Activated CD8-positive, alpha-beta T cell treated with anti-CD3 and anti-CD28 coated beads, Interleukin-2, amount 10 ng/mL, durations not matched to agents 7 days and 5 days (primary cell): ENCODE measurements at regions of chr7 and their contacts with region 1.

Region 1: DNA sequence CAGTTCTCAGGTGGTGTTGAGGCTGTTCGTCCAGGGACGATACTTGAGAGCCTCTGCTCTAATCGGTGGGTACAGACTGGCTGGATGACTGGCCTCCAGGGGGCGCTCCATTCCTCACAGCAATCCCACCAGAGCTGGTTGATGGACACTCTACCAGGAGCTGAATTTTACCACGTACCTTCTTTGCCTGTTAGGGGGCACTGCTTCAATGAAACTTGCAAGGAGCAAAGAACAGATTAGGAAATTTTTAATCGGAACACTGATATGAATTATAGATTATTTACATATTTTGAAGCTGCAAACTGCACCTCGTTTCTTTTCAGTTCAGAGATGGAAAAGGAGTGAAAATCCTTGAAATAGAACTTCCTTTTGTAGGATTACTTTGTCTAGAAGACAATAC is 44.9 kb downstream of the KBTBD2 start:
- DNase-seq: peak; percentile 93
- ATAC-seq: peak; percentile 100
- H3K4me3 Mint-ChIP-seq: peak overlapping the region; percentile 31
- H3K27ac Mint-ChIP-seq: no peak overlapping the region
- H3K4me1 Mint-ChIP-seq: peaks cover 10% of the 10 kb centered on the region
- H3K27me3 Mint-ChIP-seq: peaks cover 31% of the 10 kb centered on the region

Region 2: DNA sequence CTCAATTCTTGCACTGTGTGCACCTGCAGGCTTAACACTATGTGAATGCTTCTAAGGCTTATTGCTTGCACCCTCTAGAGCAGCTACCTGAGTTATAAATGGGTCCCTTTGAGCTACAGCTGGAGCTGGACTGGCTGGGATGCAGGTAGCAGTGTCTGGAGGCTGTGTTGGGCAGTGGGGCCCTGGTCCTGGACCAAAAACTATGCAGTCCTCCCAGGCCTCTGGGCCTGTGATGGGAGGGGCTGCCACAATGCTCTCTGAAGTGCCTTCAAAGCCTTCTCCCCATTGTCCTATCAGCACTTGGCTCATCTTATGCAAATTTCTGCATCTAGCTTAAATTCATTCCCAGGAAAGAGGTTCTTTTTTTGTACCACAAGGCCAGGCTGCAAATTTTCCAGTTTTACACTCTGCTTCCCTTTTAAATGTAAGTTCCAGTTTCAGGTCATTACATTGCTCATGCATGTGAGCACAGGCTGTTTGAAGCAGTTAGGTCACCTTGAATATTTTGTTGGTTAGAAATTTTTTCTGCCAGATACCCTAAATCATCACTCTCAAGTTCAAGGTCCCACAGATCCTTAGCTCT is 18.8 kb after region 1 on chr7:
- CTCF ChIA-PET with region 1: interaction called, 24 read pairs
- POLR2A ChIA-PET with region 1: no interaction called
- DNase-seq: no peak
- ATAC-seq: no peak
- H3K4me3 Mint-ChIP-seq: no peak overlapping the region
- H3K27ac Mint-ChIP-seq: no peak overlapping the region
- H3K4me1 Mint-ChIP-seq: no peaks in the 10 kb centered on the region
- H3K27me3 Mint-ChIP-seq: peaks cover 3% of the 10 kb centered on the region

Region 3: GRCh38 chr7:32891800-32892520 is 45.3 kb after region 1 on chr7:
- CTCF ChIA-PET with region 1: interaction called, 34 read pairs
- POLR2A ChIA-PET with region 1: interaction called, 5 read pairs
- DNase-seq: peak; percentile 98
- ATAC-seq: peak; percentile 62
- H3K4me3 Mint-ChIP-seq: peak overlapping the region; percentile 80
- H3K27ac Mint-ChIP-seq: peak overlapping the region; percentile 94
- H3K4me1 Mint-ChIP-seq: peaks cover 40% of the 10 kb centered on the region
- H3K27me3 Mint-ChIP-seq: peaks cover 4% of the 10 kb centered on the region

Region 4: GRCh38 chr7:32942786-32943653 is 96.3 kb after region 1 on chr7:
- CTCF ChIA-PET with region 1: interaction called, 68 read pairs
- POLR2A ChIA-PET with region 1: no interaction called
- DNase-seq: peak; percentile 63
- ATAC-seq: peak; percentile 86
- H3K4me3 Mint-ChIP-seq: peak overlapping the region; percentile 63
- H3K27ac Mint-ChIP-seq: no peak overlapping the region
- H3K4me1 Mint-ChIP-seq: peaks cover 17% of the 10 kb centered on the region
- H3K27me3 Mint-ChIP-seq: peaks cover 16% of the 10 kb centered on the region

Region 5: DNA sequence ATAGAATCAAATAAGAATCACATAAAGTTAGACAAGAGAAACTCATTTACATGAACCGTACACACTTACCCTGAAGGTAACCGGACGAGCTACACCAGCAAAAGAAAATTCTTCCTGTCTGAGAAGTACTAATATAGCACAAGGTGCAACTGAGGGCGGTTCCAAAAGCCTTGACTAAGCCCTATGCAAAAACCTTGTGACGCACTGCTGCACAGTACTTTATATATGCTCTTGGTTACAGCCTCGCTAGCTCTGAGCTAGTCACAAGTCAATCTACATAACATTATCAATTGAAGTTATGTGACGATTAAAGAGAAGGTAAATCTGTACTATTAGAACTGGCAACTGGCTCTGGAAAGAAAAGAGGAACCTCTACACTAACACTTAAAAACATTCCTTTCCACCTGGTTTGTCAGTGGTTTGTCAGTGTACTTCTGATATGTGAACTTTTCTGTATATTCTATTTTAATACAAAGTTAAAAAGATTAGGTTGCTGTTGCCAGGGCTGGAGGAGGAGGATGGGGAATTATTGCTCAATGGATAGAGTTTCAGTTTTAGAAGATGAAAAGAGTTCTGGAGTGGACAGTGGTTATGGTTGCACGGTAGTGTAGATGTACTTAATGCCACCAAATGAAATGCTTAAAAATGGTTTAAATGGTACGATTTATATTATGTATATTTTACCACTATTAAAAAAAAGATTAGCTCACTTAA is 194.3 kb after region 1 on chr7:
- CTCF ChIA-PET with region 1: interaction called, 20 read pairs
- POLR2A ChIA-PET with region 1: no interaction called
- DNase-seq: peak; percentile 84
- ATAC-seq: peak; percentile 98
- H3K4me3 Mint-ChIP-seq: peak overlapping the region; percentile 78
- H3K27ac Mint-ChIP-seq: peak overlapping the region; percentile 73
- H3K4me1 Mint-ChIP-seq: peaks cover 43% of the 10 kb centered on the region
- H3K27me3 Mint-ChIP-seq: no peaks in the 10 kb centered on the region

Region 6: GRCh38 chr7:33183504-33183903 is 336.8 kb after region 1 on chr7:
- CTCF ChIA-PET with region 1: no interaction called
- POLR2A ChIA-PET with region 1: no interaction called
- DNase-seq: no peak
- ATAC-seq: no peak
- H3K4me3 Mint-ChIP-seq: no peak overlapping the region
- H3K27ac Mint-ChIP-seq: no peak overlapping the region
- H3K4me1 Mint-ChIP-seq: no peaks in the 10 kb centered on the region
- H3K27me3 Mint-ChIP-seq: no peaks in the 10 kb centered on the region